Left ventricle myocardium superior (tissue), 1 donor: ENCODE measurements at regions of chr19 and their contacts with region 1.

Region 1: DNA sequence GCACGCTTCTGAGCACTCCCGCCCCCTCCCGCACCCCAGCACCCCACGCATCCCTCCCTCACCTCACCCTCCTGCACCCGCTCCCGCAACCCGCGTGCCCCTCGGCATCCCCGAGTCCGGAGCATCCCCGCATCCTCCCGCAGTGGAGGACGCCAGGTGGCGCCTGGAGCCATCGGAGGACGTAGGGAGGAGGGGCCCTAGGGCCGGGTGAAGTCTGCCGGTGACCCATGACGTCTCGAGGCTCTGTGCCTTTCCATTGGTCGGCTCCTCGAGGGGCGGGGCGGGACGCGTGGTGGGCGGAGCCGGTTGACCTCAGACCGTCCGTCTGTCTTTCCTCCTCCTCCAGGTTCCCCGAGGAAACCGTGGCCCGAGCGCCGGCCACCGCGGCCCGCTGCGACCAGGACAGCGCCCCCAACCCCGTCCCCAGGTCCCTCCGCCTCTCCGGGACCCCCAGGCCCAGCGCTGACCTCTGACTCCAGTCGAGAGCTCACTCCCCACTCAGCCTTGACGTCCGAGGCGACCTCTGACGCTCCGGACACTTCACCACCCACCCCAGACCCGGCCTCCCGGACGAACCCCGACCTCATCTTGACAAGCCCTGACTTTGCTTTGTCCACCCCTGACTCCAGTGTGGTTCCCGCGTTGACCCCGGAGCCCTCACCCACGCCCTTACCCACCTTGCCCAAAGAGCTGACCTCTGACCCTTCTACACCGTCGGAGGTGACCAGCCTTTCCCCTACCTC is 19.9 kb downstream of the SBK2 start:
- DNase-seq: peak; percentile 97
- ATAC-seq: peak; percentile 98

Region 2: DNA sequence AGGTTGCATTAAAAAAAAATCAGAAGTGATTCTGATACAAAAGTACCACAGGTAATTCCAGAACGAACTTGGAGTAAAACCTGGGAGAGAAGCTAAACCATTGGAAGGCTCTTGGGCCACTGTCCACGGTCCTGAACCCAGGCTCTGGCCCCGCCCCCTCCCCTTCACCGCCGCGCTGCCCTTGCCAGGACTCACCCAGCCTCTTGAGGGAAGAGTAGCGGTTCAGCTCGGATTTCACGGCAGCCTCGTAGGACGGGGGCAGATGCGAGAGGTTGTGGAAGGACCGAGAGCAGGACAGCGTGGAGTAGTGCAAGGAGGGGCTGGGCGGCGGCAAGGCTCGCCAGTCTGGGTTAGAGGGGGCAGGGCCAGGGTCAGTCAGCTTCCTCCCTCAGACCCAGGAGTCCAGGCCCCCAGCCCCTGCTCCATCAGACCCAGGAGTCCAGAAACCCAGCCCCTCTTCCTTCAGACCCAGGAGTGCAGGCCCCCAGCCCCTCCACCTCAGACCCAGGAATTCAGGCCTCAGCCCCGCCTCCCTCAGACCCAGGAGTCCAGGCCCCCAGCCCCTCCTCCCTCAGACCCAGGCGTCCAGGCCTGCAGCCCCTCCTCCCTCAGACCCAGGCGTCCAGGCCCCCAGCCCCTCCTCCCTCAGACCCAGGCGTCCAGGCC is 79.5 kb before region 1 on chr19:
- intact Hi-C with region 1: no loop called
- DNase-seq: peak; percentile 73
- ATAC-seq: peak; percentile 89

Region 3: DNA sequence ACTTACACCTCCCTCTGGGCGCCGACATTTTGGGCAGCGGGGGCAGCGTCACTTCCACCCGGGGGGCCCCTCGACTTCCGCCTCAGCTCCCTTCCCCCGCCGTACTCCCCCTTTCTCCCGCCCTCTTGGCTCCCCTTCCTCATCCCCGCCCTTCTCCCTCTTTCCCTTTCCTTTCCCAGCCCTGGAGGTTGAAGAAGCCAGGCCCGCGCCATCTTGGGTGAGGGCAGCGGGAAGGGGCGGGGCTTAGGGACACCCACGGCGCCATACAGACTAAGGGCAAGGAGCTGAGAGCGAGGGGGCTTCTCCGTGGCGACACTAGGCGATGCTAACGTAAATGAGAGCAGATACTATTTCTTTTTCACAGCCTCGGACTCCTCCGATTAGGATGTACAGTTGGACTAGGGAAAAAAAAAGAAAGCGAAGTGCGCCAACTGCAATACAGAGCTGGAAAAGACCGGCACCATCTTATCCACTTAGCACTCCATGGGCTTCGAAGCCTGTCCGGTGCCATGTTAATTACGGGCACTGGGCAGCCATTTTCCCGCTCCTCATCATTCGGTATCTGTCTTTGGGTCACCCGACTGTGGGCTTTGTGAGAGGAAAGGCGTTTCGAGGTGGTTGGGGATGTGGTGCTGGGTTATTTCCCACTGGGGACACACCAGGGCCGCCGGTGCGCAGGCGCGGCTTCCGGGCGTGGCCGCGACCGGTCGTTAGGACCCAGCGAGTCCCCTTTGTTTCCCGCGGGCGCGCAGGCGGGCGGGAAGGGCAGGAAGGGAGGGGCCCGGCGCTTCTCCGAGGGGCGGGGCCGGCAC is 82.6 kb after region 1 on chr19 and contains the start of gene FIZ1:
- intact Hi-C with region 1: loop called (anchors 10 kb)
- DNase-seq: peak; percentile 98
- ATAC-seq: peak; percentile 88
- total RNA-seq, gene FIZ1: 16.3 TPM